ENCODE measurements at regions of chr21 and their contacts with region 1.

Region 1: GRCh38 chr21:19864476-19864875 is 1133.7 kb upstream of the NCAM2 start:
- DNase-seq: no peak
- H3K4me3 ChIP-seq: no peak overlapping the region
- H3K27ac ChIP-seq: no peak overlapping the region
- H3K4me1 ChIP-seq: no peaks in the 10 kb centered on the region
- CTCF ChIP-seq: no peak

Region 2: DNA sequence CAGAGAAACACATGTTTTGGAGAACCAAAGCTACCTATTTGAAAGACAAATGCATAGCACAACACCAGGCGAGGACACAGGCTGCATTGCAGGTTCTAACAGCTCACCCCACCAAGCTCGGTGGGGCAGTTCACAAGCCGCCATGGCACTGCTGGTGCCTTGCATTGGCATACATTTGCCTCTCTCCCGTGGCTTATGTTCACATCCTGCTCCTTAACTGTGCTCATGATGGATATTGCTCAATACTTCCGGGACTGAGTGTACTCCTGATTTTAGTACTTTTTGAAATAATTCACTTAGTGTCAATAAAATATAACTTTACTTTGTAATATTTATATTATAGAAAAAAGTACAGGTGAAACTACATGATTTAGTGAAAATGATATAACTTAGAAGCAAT is 53.7 kb before region 1 on chr21:
- CTCF ChIA-PET with region 1: no interaction called
- POLR2A ChIA-PET with region 1: no interaction called
- intact Hi-C with region 1: no loop called
- DNase-seq: no peak
- H3K4me3 ChIP-seq: no peak overlapping the region
- H3K27ac ChIP-seq: no peak overlapping the region
- H3K4me1 ChIP-seq: no peaks in the 10 kb centered on the region
- CTCF ChIP-seq: no peak

Region 3: DNA sequence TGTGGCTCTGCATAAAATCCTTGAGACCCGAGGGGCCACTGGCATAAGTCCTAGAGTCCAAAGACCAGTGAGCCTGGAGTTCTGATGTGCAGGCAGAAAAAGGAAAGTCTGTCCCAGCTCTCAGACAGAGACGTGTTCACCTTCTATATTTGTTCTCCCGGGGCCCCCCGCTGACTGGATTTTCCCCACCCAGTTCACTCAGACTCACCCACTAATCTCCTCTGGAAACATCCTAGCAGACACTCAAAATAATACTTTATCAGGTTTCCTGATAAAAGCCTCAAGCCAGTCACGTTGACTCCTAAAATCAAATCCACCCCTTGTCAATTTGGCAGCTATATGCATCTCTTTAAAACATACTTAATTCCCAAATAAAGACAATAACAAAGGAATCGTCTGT is 49.6 kb after region 1 on chr21:
- CTCF ChIA-PET with region 1: no interaction called
- POLR2A ChIA-PET with region 1: no interaction called
- intact Hi-C with region 1: loop called (anchors 5 kb)
- DNase-seq: no peak
- H3K4me3 ChIP-seq: no peak overlapping the region
- H3K27ac ChIP-seq: no peak overlapping the region
- H3K4me1 ChIP-seq: no peaks in the 10 kb centered on the region
- CTCF ChIP-seq: no peak

Measured in OCI-LY7 (cell line).